ENCODE measurements at regions of chr3 and their contacts with region 1.

Region 1: GRCh38 chr3:195271116-195271858 is at the start of gene XXYLT1:
- DNase-seq: peak; percentile 82
- H3K4me3 ChIP-seq: peak within 1 kb of the TSS; percentile 67 to 82 (median 80)
- H3K27ac ChIP-seq: peak within 1 kb of the TSS; percentile 55
- H3K4me1 ChIP-seq: peaks cover 17% of the 10 kb centered on the region
- H3K27me3 ChIP-seq: no peaks in the 10 kb centered on the region
- CTCF ChIP-seq: peak; percentile 67 to 93
- total RNA-seq, gene XXYLT1: 12.3 to 15.6 TPM

Region 2: GRCh38 chr3:194671900-194672808 is 599.1 kb before region 1 on chr3 and contains the start of gene LSG1:
- CTCF ChIA-PET with region 1: interaction called, 10 read pairs
- dilution Hi-C with region 1: no loop called
- in situ Hi-C with region 1: no loop called
- intact Hi-C with region 1: no loop called
- DNase-seq: peak; percentile 90
- H3K4me3 ChIP-seq: peak within 1 kb of the TSS; percentile 57 to 96 (median 95)
- H3K27ac ChIP-seq: peak within 1 kb of the TSS; percentile 98
- H3K4me1 ChIP-seq: peaks cover 21% of the 10 kb centered on the region
- H3K27me3 ChIP-seq: no peaks in the 10 kb centered on the region
- CTCF ChIP-seq: no peak
- total RNA-seq, gene LSG1: 33.5 to 33.8 TPM

Region 3: DNA sequence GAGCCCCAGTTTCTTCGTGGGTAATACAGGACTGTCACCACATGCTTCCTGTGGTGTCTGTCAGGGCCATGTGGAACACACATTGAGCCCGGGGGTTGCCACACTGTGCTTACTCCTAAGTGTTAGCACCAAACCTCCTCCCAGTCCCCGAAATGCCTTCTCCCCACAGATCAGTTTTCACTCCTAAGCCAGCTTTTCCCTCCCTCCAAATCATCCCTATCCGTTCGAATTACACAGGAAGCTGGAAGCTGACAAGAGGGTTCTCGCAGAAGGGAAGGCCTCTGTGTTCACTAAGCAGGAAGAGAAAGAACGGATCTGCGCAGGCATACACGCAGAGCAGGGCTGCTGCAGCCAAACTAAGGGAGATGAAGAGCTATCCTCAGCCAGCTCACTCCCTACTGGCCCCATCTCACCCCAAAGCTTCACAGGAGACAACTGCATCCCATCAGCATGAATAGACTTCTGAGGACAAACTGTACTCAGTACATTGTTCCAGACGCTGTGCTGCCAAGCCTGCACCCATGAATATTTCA is 32.6 kb before region 1 on chr3:
- CTCF ChIA-PET with region 1: no interaction called
- dilution Hi-C with region 1: no loop called
- in situ Hi-C with region 1: no loop called
- intact Hi-C with region 1: no loop called
- DNase-seq: no peak
- H3K4me3 ChIP-seq: no peak overlapping the region
- H3K27ac ChIP-seq: no peak overlapping the region
- H3K4me1 ChIP-seq: peaks cover 10% of the 10 kb centered on the region
- H3K27me3 ChIP-seq: no peaks in the 10 kb centered on the region
- CTCF ChIP-seq: no peak

Region 4: DNA sequence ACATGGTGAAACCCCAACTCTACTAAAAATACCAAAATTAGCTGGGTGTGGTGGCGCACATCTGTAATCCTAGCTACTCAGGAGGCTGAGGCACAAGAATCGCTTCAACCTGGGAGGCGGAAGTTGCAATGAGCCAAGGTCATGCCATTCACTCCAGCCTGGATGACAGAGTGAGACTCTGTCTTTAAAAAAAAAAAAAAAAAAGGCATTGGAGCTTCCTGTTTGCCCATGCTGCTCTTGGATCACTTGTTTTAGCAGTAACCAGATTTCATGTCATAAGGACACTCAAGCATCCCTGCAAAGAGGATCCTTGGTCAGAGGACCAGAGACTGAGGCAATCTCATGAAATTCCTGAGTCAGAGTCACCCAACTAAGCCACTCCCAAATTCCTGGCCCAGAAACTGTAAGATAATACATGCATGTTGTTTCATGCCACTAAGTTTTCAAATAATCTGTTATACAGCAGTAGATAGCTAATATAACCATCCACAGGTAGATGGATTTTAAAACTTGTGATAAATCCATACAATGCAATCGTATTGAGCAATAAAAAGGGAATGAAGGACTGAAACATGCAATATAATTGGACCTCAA is 81.7 kb after region 1 on chr3:
- CTCF ChIA-PET with region 1: no interaction called
- dilution Hi-C with region 1: no loop called
- in situ Hi-C with region 1: no loop called
- intact Hi-C with region 1: loop called (anchors 2 kb)
- DNase-seq: peak; percentile 70
- H3K4me3 ChIP-seq: no peak overlapping the region
- H3K27ac ChIP-seq: peak overlapping the region; percentile 52
- H3K4me1 ChIP-seq: peaks cover 13% of the 10 kb centered on the region
- H3K27me3 ChIP-seq: no peaks in the 10 kb centered on the region
- CTCF ChIP-seq: no peak

Region 5: DNA sequence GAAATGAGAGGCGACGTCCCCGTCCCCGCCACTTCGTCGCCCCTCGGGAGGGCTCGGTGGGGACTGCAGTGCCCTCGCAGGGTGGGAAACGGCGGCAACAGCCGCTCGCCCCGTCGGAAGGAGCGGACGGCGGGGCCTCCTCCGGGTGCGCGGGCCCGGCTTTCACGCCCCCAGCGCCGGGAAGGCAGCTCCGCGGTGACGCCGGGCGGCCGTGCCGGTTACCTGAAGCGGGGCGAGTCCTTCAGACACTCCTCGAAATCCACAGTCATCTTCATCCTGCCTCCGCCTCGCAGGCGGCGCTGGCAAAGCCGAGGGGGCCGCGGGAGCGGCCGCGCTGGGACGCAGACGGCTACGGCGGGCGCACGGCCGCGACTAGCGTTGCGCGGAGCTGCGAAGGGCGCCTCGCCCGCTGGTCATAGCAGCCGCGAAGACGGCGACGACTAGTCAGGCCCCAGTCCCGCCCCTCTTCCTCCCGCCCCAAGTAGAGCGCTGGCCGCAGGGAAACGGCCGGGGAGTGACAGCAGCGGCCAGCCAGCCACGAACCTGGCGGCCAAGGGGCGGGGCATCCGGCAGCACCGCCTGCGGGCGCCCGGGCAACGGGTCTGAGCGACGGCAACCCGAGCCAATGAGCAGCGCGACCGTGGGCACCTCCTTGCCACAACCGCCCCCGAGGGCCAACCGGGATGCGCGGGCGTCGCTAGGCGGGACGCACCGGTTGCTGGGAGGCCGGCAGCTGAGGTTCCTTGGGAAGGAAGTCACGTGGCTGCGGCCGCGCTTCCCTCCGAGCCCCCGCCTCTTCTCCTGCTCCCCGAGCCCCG is 171.5 kb after region 1 on chr3 and contains the start of gene ACAP2:
- CTCF ChIA-PET with region 1: interaction called, 4 read pairs
- dilution Hi-C with region 1: no loop called
- in situ Hi-C with region 1: no loop called
- intact Hi-C with region 1: loop called (anchors 1 kb)
- DNase-seq: peak; percentile 99
- H3K4me3 ChIP-seq: peak within 1 kb of the TSS; percentile 77 to 95 (median 82)
- H3K27ac ChIP-seq: peak within 1 kb of the TSS; percentile 71
- H3K4me1 ChIP-seq: peaks cover 19% of the 10 kb centered on the region
- H3K27me3 ChIP-seq: no peaks in the 10 kb centered on the region
- CTCF ChIP-seq: no peak
- total RNA-seq, gene ACAP2: 46.6 to 59.2 TPM

Region 6: GRCh38 chr3:195542698-195543499 is 271.6 kb after region 1 on chr3 and contains the start of gene PPP1R2:
- CTCF ChIA-PET with region 1: no interaction called
- dilution Hi-C with region 1: no loop called
- in situ Hi-C with region 1: loop called (anchors 10 to 25 kb)
- intact Hi-C with region 1: no loop called
- DNase-seq: peak; percentile 86
- H3K4me3 ChIP-seq: peak within 1 kb of the TSS; percentile 76 to 93 (median 88)
- H3K27ac ChIP-seq: peak within 1 kb of the TSS; percentile 74
- H3K4me1 ChIP-seq: peaks cover 26% of the 10 kb centered on the region
- H3K27me3 ChIP-seq: no peaks in the 10 kb centered on the region
- CTCF ChIP-seq: no peak
- total RNA-seq, gene PPP1R2: 45.5 to 129 TPM

Region 7: GRCh38 chr3:195732940-195733339 is 461.7 kb after region 1 on chr3:
- CTCF ChIA-PET with region 1: no interaction called
- dilution Hi-C with region 1: no loop called
- in situ Hi-C with region 1: no loop called
- intact Hi-C with region 1: no loop called
- DNase-seq: no peak
- H3K4me3 ChIP-seq: no peak overlapping the region
- H3K27ac ChIP-seq: no peak overlapping the region
- H3K4me1 ChIP-seq: no peaks in the 10 kb centered on the region
- H3K27me3 ChIP-seq: peaks cover 3% of the 10 kb centered on the region
- CTCF ChIP-seq: no peak